Caco-2 (cell line): ENCODE measurements at regions of chr11 and their contacts with region 1.

Region 1: DNA sequence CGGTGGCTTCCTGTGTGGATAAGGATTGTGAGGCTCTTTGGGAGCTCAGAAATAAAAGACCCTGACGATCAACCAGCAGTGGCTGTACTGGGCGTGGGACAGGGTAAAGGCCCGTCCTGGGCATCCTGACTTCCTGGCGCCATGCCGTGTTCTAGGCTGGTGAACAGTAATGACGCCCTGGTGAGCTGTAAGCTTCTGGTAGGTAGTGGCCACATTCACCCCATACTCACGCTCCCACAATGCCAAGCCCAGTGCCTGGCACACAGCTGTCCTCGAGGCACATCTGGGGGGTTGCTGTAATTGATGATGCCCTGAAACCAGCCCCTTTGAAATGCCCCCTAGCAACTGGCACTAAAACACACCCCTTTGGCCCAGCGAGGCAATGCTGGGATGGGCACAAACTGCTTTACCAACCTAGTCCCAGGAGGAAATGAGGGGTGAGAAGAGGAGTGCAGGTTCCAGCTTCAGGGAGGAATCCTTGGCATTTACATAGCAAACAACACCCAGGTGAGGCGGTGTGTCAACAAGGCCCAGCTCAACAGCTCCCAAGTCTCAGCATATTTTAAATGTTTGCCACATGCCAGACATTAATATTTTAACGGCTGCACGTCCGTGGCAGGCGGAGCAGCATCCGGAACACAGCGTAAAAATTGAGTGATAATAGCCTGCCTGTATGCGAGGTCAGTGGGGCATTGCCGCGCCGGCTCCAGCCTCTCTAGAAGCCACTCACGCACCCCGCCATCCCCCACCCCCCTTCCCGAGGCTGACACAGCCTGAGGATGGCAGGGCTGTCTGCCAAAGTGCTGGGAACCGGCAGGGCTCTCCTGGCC is 79.3 kb downstream of the DSCAML1 start:
- DNase-seq: peak; percentile 90 to 95
- H3K4me3 ChIP-seq: peak overlapping the region; percentile 15
- H3K4me3 Mint-ChIP-seq: peak overlapping the region; percentile 75
- H3K27ac Mint-ChIP-seq: peak overlapping the region; percentile 96
- H3K4me1 ChIP-seq: peaks cover 49% of the 10 kb centered on the region
- H3K4me1 Mint-ChIP-seq: peaks cover 45% of the 10 kb centered on the region
- H3K27me3 ChIP-seq: no peaks in the 10 kb centered on the region
- H3K27me3 Mint-ChIP-seq: no peaks in the 10 kb centered on the region
- CTCF ChIP-seq: no peak

Region 2: GRCh38 chr11:117684731-117685130 is 33.0 kb before region 1 on chr11:
- CTCF ChIA-PET with region 1: no interaction called
- POLR2A ChIA-PET with region 1: interaction called, 3 read pairs
- intact Hi-C with region 1: loop called (anchors 1 kb)
- DNase-seq: peak; percentile 68 to 76
- H3K4me3 ChIP-seq: no peak overlapping the region
- H3K4me3 Mint-ChIP-seq: no peak overlapping the region
- H3K27ac Mint-ChIP-seq: peak overlapping the region; percentile 27
- H3K4me1 ChIP-seq: peaks cover 18% of the 10 kb centered on the region
- H3K4me1 Mint-ChIP-seq: peaks cover 13% of the 10 kb centered on the region
- H3K27me3 ChIP-seq: no peaks in the 10 kb centered on the region
- H3K27me3 Mint-ChIP-seq: no peaks in the 10 kb centered on the region
- CTCF ChIP-seq: no peak

Region 3: DNA sequence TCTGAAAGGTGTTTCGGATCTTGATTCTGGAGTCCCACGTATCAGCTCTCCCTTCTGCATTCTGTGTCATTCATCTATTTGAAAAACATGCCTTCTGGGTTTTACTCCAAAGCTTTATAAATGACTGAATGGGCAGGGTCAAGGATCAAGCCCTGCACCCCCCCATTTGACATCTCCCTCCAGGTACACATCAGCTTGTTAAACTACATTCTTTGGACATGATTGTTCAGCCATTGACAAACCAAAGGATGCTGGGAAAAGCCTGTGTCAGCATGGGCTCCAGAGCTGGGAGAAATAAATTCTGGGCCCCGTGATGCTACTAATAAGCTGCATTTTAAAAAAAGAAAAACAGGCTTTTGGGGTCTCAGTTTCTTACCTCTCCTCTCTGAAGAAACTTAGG is 24.4 kb before region 1 on chr11:
- CTCF ChIA-PET with region 1: no interaction called
- POLR2A ChIA-PET with region 1: interaction called, 4 read pairs
- intact Hi-C with region 1: loop called (anchors 1 kb)
- DNase-seq: peak; percentile 66 to 67
- H3K4me3 ChIP-seq: no peak overlapping the region
- H3K4me3 Mint-ChIP-seq: peak overlapping the region; percentile 31
- H3K27ac Mint-ChIP-seq: peak overlapping the region; percentile 22
- H3K4me1 ChIP-seq: peaks cover 18% of the 10 kb centered on the region
- H3K4me1 Mint-ChIP-seq: peaks cover 14% of the 10 kb centered on the region
- H3K27me3 ChIP-seq: no peaks in the 10 kb centered on the region
- H3K27me3 Mint-ChIP-seq: no peaks in the 10 kb centered on the region
- CTCF ChIP-seq: no peak

Region 4: DNA sequence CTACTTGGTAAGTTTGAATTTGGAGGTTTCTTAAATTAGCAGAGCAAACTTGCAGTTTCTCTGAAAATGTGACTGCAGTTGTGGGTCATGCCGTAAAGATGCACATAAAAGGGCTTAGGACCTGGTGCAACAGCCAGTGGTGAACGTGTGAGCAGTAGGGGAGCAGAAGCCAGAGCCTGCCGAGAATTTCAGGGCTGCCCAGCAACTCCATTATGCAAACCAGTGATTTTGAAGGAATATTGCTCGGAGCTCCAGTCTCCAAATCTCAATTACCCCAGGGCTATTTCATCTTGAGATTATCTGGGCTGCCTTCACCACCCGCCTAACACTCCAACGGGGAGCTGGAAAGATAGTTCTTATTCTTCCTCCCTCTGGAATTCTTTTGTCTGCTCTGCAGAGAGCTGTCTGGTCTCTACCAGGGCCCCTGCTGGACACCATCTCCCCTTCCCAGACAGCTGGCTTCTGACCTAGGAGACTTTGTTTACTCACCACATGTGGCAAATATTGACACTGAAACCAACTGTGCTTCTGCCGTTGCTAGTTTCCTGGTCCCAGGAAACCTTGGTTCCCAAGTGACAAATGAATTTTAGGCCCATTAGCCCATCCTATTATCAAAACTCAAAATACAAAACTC is 14.6 kb before region 1 on chr11:
- CTCF ChIA-PET with region 1: interaction called, 4 read pairs
- POLR2A ChIA-PET with region 1: interaction called, 3 read pairs
- intact Hi-C with region 1: loop called (anchors 1 kb)
- DNase-seq: peak; percentile 77 to 78
- H3K4me3 ChIP-seq: no peak overlapping the region
- H3K4me3 Mint-ChIP-seq: peak overlapping the region; percentile 25
- H3K27ac Mint-ChIP-seq: peak overlapping the region; percentile 25
- H3K4me1 ChIP-seq: peaks cover 33% of the 10 kb centered on the region
- H3K4me1 Mint-ChIP-seq: peaks cover 37% of the 10 kb centered on the region
- H3K27me3 ChIP-seq: no peaks in the 10 kb centered on the region
- H3K27me3 Mint-ChIP-seq: no peaks in the 10 kb centered on the region
- CTCF ChIP-seq: peak in 1 of 2 experiments; percentile 63

Region 5: GRCh38 chr11:117807482-117808327 is 90.0 kb after region 1 on chr11:
- CTCF ChIA-PET with region 1: no interaction called
- POLR2A ChIA-PET with region 1: no interaction called
- intact Hi-C with region 1: loop called (anchors 5 kb)
- DNase-seq: peak; percentile 76 to 85
- H3K4me3 ChIP-seq: no peak overlapping the region
- H3K4me3 Mint-ChIP-seq: no peak overlapping the region
- H3K27ac Mint-ChIP-seq: no peak overlapping the region
- H3K4me1 ChIP-seq: no peaks in the 10 kb centered on the region
- H3K4me1 Mint-ChIP-seq: no peaks in the 10 kb centered on the region
- H3K27me3 ChIP-seq: no peaks in the 10 kb centered on the region
- H3K27me3 Mint-ChIP-seq: peaks cover 15% of the 10 kb centered on the region
- CTCF ChIP-seq: peak; percentile 97 to 98